ENCODE measurements at regions of chr20 and their contacts with region 1.

Region 1: GRCh38 chr20:19889011-19889953 is 127.9 kb upstream of the NAA20 start:
- DNase-seq: no peak
- H3K4me3 Mint-ChIP-seq: peak overlapping the region; percentile 61
- H3K27ac Mint-ChIP-seq: peak overlapping the region; percentile 63
- H3K4me1 Mint-ChIP-seq: peaks cover 35% of the 10 kb centered on the region
- H3K27me3 Mint-ChIP-seq: no peaks in the 10 kb centered on the region
- CTCF ChIP-seq: no peak

Region 2: GRCh38 chr20:19815553-19815991 is 73.7 kb before region 1 on chr20:
- CTCF ChIA-PET with region 1: no interaction called
- intact Hi-C with region 1: loop called (anchors 10 kb)
- DNase-seq: peak; percentile 31
- H3K4me3 Mint-ChIP-seq: no peak overlapping the region
- H3K27ac Mint-ChIP-seq: no peak overlapping the region
- H3K4me1 Mint-ChIP-seq: no peaks in the 10 kb centered on the region
- H3K27me3 Mint-ChIP-seq: no peaks in the 10 kb centered on the region
- CTCF ChIP-seq: no peak

Region 3: GRCh38 chr20:19974626-19975435 is 85.5 kb after region 1 on chr20:
- CTCF ChIA-PET with region 1: interaction called, 5 read pairs
- intact Hi-C with region 1: loop called (anchors 5 kb)
- DNase-seq: peak; percentile 65
- H3K4me3 Mint-ChIP-seq: peak overlapping the region; percentile 62
- H3K27ac Mint-ChIP-seq: peak overlapping the region; percentile 77
- H3K4me1 Mint-ChIP-seq: no peaks in the 10 kb centered on the region
- H3K27me3 Mint-ChIP-seq: no peaks in the 10 kb centered on the region
- CTCF ChIP-seq: no peak